PC-9 (cell line): ENCODE measurements at regions of chr13 and their contacts with region 1.

Region 1: DNA sequence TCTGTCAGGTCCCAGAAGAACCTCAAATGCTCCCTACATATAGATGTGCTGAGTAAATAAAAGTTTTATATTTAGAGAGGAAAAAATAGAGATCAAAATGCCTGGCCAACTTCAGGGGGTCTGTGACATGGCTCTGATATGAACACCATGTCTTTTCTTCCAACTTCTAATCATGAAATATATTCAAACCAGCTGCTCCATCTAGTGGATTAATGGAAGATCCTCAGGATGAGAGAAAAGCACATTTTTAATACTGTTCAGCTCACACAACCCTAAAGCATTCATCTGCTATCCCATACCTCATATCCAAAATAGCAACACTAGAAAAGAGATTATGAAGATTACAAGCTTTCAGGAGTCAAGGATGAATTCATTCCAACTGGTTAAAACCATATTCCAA is 56.0 kb upstream of the DOCK9 start:
- DNase-seq: no peak
- H3K4me3 ChIP-seq: no peak overlapping the region
- H3K27ac ChIP-seq: no peak overlapping the region
- H3K4me1 ChIP-seq: peaks cover 26% of the 10 kb centered on the region
- H3K27me3 ChIP-seq: no peaks in the 10 kb centered on the region
- CTCF ChIP-seq: peak; percentile 74

Region 2: GRCh38 chr13:98842864-98843481 is 190.8 kb before region 1 on chr13:
- CTCF ChIA-PET with region 1: no interaction called
- POLR2A ChIA-PET with region 1: no interaction called
- intact Hi-C with region 1: loop called (anchors 1 kb)
- DNase-seq: peak; percentile 59 to 62
- H3K4me3 ChIP-seq: no peak overlapping the region
- H3K27ac ChIP-seq: no peak overlapping the region
- H3K4me1 ChIP-seq: no peaks in the 10 kb centered on the region
- H3K27me3 ChIP-seq: no peaks in the 10 kb centered on the region
- CTCF ChIP-seq: peak; percentile 93

Region 3: DNA sequence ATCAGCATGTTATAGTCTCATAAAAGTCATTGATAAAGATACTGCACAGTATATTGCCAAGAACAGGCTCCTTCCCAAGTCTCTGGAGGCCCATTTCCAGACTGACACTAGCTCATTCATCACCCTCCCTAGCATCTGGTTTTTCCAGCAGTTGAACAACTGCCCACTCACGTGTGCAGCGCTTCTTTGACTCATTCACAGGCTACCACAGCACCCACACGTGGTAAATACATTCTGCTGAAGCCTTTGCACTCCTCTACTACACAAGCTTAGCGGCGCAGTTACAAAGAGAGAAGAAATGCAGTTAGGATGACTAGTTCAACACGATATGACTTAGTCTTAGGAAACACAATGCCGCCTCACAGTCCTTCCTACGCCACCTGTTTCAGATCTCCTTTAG is 143.6 kb before region 1 on chr13:
- CTCF ChIA-PET with region 1: interaction called, 4 read pairs
- POLR2A ChIA-PET with region 1: no interaction called
- intact Hi-C with region 1: loop called (anchors 5 kb)
- DNase-seq: peak; percentile 23 to 52
- H3K4me3 ChIP-seq: no peak overlapping the region
- H3K27ac ChIP-seq: peak overlapping the region; percentile 55
- H3K4me1 ChIP-seq: peaks cover 17% of the 10 kb centered on the region
- H3K27me3 ChIP-seq: no peaks in the 10 kb centered on the region
- CTCF ChIP-seq: no peak

Region 4: DNA sequence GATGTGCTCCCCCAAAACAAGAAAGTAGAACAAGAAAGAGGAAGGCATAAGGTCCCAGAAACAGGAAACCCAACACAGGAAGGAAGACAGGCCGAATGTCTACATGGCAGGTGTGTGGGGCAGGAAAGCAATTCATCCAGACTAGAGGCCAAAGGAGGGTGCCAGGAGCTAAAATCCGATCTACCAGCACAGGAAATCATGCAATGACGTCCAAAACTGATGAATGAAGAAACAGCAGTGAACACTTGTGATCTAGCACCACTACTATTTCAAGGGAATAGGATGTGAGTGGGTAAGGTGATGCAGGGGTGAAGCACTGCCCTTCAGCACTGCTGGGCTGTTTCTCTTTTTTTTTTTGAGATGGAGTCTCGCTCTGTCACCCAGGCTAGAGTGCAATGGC is 115.0 kb before region 1 on chr13:
- CTCF ChIA-PET with region 1: no interaction called
- POLR2A ChIA-PET with region 1: no interaction called
- intact Hi-C with region 1: no loop called
- DNase-seq: no peak
- H3K4me3 ChIP-seq: no peak overlapping the region
- H3K27ac ChIP-seq: no peak overlapping the region
- H3K4me1 ChIP-seq: no peaks in the 10 kb centered on the region
- H3K27me3 ChIP-seq: no peaks in the 10 kb centered on the region
- CTCF ChIP-seq: no peak

Region 5: GRCh38 chr13:98977568-98978265 is 56.1 kb before region 1 on chr13 and contains the start of gene DOCK9:
- CTCF ChIA-PET with region 1: no interaction called
- POLR2A ChIA-PET with region 1: interaction called, 11 read pairs
- intact Hi-C with region 1: loop called (anchors 5 kb)
- DNase-seq: peak; percentile 54 to 72
- H3K4me3 ChIP-seq: peak within 1 kb of the TSS; percentile 41; the same call in 1 of the 2 replicates
- H3K27ac ChIP-seq: peak within 1 kb of the TSS; percentile 74
- H3K4me1 ChIP-seq: peaks cover 58% of the 10 kb centered on the region
- H3K27me3 ChIP-seq: no peaks in the 10 kb centered on the region
- CTCF ChIP-seq: no peak
- total RNA-seq, gene DOCK9: 53.4 and 69.5 TPM in 2 replicates

Region 6: GRCh38 chr13:99067160-99067985 is 33.6 kb after region 1 on chr13:
- CTCF ChIA-PET with region 1: no interaction called
- POLR2A ChIA-PET with region 1: interaction called, 15 read pairs
- intact Hi-C with region 1: no loop called
- DNase-seq: peak; percentile 30 to 97
- H3K4me3 ChIP-seq: no peak overlapping the region; the same call in 1 of the 2 replicates
- H3K27ac ChIP-seq: peak overlapping the region; percentile 66
- H3K4me1 ChIP-seq: peaks cover 26% of the 10 kb centered on the region
- H3K27me3 ChIP-seq: no peaks in the 10 kb centered on the region
- CTCF ChIP-seq: no peak